HepG2 (cell line): ENCODE measurements at regions of chr6 and their contacts with region 1.

Region 1: DNA sequence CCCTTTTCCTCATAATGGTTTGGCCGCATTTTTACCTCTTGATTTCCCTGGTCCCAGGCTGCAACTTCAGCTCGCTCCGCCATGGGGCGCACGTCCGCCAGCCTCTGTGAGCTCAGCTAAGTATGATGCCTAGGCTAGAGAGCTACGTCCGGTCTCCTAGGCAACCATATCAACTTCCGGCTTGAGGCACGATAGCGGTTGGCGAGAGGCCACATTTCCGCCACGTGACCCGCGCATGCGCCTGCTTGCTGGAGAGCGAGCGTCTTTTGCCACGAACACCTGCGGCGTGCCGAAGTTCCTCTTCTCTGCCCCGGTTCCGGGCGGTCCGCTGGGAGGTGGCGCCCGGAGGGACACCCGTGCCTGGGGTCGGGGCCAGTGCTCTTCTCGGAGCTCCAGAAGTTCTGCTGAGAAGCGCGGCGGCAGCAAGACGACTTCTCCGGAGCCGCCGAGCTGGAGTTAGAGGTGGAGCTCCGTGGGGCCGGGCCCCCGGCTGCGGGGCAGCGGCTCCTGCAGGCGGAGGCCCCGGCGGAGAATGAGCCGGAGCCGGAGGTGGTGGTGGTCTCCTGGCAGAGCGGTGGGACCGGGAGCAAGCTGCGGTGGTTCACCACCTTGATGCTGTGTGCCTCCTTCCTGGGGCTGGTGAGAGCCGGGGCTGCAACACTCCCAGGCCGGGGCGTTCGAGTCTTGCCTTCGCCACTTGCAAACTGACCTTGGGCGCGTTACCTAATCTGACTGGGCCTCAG is 172.0 kb downstream of the SLC16A10 start:
- DNase-seq: peak; percentile 98
- ATAC-seq: peak; percentile 95
- H3K4me3 ChIP-seq: peak overlapping the region; percentile 71 to 89 (median 86)
- H3K27ac ChIP-seq: peak overlapping the region; percentile 92
- H3K4me1 ChIP-seq: peaks cover 45% of the 10 kb centered on the region
- H3K27me3 ChIP-seq: no peaks in the 10 kb centered on the region
- CTCF ChIP-seq: peak; percentile 98
- EP300 ChIP-seq: peak in 1 of 2 experiments; percentile 33; a peak in 1 of 4 replicates
- POLR2A ChIP-seq: peak; percentile 69 to 91
- RAD21 ChIP-seq: peak; percentile 84

Region 2: DNA sequence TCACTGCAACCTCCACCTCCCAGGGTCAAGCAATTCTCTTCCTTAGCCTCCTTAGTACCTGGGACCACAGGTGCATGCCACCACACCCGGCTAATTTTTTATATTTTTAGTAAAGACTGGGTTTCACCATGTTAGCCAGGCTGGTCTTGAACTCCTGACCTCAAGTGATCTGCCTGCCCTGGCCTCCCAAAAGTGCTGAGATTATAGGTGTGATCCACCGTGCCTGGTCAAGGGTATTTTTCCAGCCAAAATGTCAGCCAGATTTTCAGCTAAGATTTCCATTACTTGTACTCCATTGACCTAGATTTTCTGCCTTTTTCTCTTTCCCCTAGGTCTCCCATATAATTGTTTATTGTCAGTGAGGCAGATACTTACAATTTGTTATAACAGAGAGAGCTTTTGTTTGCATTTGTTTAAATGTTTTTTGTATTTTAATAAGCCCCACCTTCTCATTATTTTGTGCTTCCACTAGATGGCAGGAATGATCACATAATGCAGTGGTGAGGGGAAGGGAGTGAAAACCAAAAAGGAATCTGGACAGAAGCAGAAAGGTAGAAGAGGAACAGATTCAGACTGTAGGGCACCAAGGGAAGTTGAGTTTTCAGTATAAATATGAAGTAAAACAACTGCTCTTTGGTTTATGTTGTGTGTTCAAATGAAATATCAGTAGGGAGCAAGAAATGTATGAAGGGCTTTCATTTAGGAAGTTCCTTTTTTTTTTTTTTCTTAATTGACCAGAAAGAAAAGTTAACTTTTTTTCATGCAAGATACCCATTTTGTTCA is 247.7 kb before region 1 on chr6:
- CTCF ChIA-PET with region 1: no interaction called
- POLR2A ChIA-PET with region 1: no interaction called
- in situ Hi-C with region 1: no loop called
- intact Hi-C with region 1: loop called (anchors 1 kb)
- DNase-seq: peak; percentile 32
- ATAC-seq: peak; percentile 82
- H3K4me3 ChIP-seq: no peak overlapping the region
- H3K27ac ChIP-seq: no peak overlapping the region
- H3K4me1 ChIP-seq: no peaks in the 10 kb centered on the region
- H3K27me3 ChIP-seq: no peaks in the 10 kb centered on the region
- CTCF ChIP-seq: peak; percentile 69
- EP300 ChIP-seq: no peak
- POLR2A ChIP-seq: no peak
- RAD21 ChIP-seq: peak; percentile 41; the same call in 1 of the 2 replicates

Region 3: DNA sequence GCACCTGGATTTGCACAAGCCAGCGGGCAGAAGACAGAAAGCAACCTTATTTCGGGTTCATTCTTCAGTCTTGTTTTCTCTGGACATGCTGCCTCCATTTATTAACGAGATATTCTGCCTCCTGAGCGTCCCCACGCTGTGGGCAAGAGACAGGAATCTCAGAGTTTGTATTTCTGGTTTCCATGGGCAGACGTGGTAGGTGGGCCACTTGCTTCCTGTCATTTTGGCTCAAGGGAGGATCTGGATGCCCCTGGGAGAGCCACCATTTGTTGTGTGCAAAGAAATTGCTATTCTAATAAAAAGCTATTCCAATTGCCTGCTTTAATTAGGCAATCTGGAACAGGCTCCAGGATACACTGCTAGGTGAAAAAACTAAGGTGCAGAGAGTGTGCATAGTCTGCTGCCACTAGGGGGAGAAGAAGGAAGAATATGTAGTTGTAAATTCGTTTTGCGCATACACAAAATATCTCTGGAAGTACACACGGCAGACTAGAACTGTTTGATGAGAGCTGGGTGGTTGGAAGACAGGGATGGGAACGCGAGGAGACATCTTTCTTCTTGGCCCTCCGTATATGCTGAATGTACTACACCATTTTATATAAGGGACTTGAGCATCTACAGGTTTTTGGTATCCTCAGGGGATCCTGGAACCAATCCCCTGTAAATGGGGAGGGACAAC is 202.0 kb before region 1 on chr6:
- CTCF ChIA-PET with region 1: interaction called, 3 read pairs
- POLR2A ChIA-PET with region 1: no interaction called
- in situ Hi-C with region 1: no loop called
- intact Hi-C with region 1: loop called (anchors 2 kb)
- DNase-seq: peak; percentile 32
- ATAC-seq: peak; percentile 90
- H3K4me3 ChIP-seq: no peak overlapping the region
- H3K27ac ChIP-seq: no peak overlapping the region
- H3K4me1 ChIP-seq: peaks cover 3% of the 10 kb centered on the region
- H3K27me3 ChIP-seq: no peaks in the 10 kb centered on the region; a peak in 1 of 5 replicates
- CTCF ChIP-seq: peak; percentile 71
- EP300 ChIP-seq: no peak
- POLR2A ChIP-seq: no peak
- RAD21 ChIP-seq: peak; percentile 67

Region 4: GRCh38 chr6:111087106-111087835 is 172.0 kb before region 1 on chr6 and contains the start of gene SLC16A10:
- CTCF ChIA-PET with region 1: no interaction called
- POLR2A ChIA-PET with region 1: interaction called, 3 read pairs
- in situ Hi-C with region 1: no loop called
- intact Hi-C with region 1: loop called (anchors 5 kb)
- DNase-seq: peak; percentile 65
- ATAC-seq: peak; percentile 88
- H3K4me3 ChIP-seq: peak within 1 kb of the TSS; percentile 67 to 85 (median 85)
- H3K27ac ChIP-seq: peak within 1 kb of the TSS; percentile 53
- H3K4me1 ChIP-seq: peaks cover 45% of the 10 kb centered on the region
- H3K27me3 ChIP-seq: no peaks in the 10 kb centered on the region
- CTCF ChIP-seq: no peak
- EP300 ChIP-seq: no peak
- POLR2A ChIP-seq: peak; percentile 91 to 94
- RAD21 ChIP-seq: peak; percentile 61; the same call in 1 of the 2 replicates
- total RNA-seq, gene SLC16A10: 11.3 and 20.1 TPM in 2 replicates